IMR-90 (cell line): ENCODE measurements at regions of chr3 and their contacts with region 1.

Region 1: DNA sequence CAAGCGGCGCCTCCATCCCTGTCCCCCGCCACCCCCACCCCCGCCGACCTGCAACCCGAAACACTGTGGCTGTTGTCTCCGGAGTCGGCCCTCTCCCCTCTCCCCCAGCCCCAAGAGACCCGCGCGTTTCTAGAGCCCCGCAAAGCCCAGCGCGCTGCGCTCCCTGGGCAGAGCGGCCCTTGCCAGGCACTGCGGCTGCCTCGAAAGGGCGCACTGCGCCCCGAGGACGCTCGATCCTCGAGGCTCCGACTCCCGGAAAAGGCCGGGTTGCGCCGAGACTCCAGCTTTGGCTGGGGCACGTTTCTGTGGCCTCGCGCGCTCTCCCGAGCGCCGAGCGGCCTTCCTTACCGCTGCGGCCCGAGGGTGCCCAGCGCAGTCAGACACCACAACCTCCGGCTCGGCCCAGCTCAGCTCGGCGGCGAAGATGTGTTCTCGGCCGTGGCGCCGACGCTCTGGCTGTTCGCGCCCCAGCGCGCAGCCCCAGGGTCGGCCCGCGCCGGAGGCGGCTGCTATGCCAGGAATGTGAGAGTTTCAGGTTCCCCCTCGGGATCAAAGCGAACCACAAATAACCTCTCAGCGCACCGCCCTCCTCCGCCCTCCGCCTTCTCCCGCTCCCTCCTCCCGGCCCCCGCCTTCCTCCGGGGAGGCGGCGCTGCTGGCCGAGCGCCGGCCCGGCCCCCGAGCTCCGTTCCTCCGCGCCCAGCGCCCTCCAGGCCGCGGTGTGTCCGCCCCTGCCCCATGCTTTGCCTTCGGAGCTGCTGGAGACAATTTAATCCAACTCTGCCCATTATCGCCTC is at the start of gene AMOTL2:
- DNase-seq: peak; percentile 97
- ATAC-seq: peak; percentile 76
- H3K4me3 ChIP-seq: peak within 1 kb of the TSS; percentile 76
- H3K27ac ChIP-seq: peak within 1 kb of the TSS; percentile 99
- H3K4me1 ChIP-seq: peaks cover 29% of the 10 kb centered on the region
- H3K27me3 ChIP-seq: no peaks in the 10 kb centered on the region
- CTCF ChIP-seq: no peak
- POLR2A ChIP-seq: peak; percentile 99
- RAD21 ChIP-seq: peak; percentile 17; the same call in 1 of the 2 replicates
- total RNA-seq, gene AMOTL2: 162 and 172 TPM in 2 replicates

Region 2: GRCh38 chr3:134161898-134162615 is 212.1 kb before region 1 on chr3:
- CTCF ChIA-PET with region 1: no interaction called
- POLR2A ChIA-PET with region 1: no interaction called
- dilution Hi-C with region 1: no loop called
- in situ Hi-C with region 1: no loop called
- intact Hi-C with region 1: no loop called
- DNase-seq: no peak
- ATAC-seq: no peak
- H3K4me3 ChIP-seq: no peak overlapping the region
- H3K27ac ChIP-seq: no peak overlapping the region
- H3K4me1 ChIP-seq: peaks cover 2% of the 10 kb centered on the region; the same call in 1 of the 2 replicates
- H3K27me3 ChIP-seq: no peaks in the 10 kb centered on the region
- CTCF ChIP-seq: no peak
- POLR2A ChIP-seq: no peak
- RAD21 ChIP-seq: no peak

Region 3: DNA sequence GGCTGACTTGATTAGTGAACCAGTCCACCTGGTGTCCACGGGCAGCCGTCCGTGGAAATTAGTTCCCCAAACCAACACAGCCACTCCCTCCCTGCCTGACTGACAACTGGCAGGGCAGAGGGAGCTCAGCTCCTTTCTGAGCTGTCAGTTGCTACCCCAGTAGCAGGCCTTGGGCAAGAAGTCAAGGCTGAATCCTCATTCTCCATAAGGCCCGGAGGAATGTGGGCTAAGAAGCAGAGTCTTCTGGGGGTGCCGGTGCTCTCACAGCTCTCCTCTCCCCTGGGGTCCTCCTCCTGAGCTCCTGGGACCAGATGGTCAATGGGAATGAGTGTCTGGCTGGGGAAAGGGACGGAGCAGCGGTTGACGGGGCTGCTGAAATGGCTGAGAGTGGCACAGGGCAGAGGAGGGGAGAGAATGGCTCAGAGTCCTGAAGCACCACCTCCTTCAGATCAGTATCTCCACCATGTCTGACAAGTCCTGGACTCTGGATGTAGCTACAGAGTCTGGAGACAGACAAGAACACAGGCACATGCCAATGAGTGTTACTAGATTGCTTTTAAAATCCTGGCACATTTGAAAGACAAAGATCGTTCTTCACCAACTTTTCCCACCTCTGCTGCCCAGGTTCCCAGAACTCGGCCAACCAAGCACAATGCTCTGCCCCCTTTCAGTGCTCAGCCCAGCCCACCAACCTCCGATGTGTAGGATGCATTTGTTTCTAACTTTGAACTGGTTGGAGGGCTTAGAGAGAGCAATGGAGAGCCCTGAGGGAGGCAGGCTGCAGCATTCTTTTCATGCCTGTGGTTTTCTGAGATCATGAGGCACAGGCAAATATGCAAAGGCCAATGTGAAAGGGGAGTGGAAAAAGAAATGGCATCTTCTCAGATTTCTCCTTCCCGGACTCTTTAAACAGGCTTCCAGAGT is 16.7 kb before region 1 on chr3:
- CTCF ChIA-PET with region 1: interaction called, 3 read pairs
- POLR2A ChIA-PET with region 1: interaction called, 11 read pairs
- dilution Hi-C with region 1: no loop called
- in situ Hi-C with region 1: no loop called
- intact Hi-C with region 1: no loop called
- DNase-seq: peak; percentile 96
- ATAC-seq: peak; percentile 73
- H3K4me3 ChIP-seq: no peak overlapping the region
- H3K27ac ChIP-seq: peak overlapping the region; percentile 95
- H3K4me1 ChIP-seq: peaks cover 60% of the 10 kb centered on the region
- H3K27me3 ChIP-seq: no peaks in the 10 kb centered on the region
- CTCF ChIP-seq: no peak
- POLR2A ChIP-seq: peak; percentile 56
- RAD21 ChIP-seq: peak; percentile 36

Region 4: DNA sequence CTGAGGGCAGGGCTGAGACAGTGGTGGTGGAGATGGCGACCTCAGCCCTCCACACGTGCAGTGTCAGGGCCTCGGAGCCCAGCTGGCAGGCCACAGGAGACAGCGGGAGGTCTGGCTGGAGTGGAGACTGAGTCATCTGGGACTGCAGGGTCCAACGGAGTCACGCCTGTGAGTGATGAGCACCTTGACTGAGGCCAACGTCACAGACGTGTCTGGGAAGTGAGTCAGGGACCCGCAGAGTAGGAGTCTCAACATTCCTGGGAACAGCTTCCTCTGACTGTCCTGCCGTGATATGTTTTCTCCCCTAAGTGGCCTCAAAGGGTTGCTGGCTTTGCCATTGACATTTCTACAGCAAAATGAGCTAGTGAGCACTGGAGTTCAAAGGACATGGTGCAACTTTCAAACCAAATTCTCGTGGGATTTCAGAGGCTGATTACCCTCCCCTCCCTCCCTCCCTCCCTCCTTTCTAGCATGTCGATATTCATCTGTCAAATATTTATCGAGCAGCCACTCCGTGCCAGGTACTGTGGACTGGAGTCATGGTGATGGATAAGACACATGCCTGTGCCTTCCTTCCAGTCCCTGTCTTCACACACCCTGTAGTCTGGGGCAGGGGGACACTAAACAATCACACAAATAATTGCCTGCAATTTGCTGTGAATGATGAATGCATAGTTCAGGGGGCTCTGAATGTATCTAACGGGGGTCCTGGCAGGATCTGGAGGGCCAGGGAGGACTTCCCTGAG is 53.4 kb after region 1 on chr3:
- CTCF ChIA-PET with region 1: no interaction called
- POLR2A ChIA-PET with region 1: interaction called, 4 read pairs
- dilution Hi-C with region 1: no loop called
- in situ Hi-C with region 1: no loop called
- intact Hi-C with region 1: loop called (anchors 1 kb)
- DNase-seq: peak; percentile 100
- ATAC-seq: peak; percentile 88
- H3K4me3 ChIP-seq: no peak overlapping the region
- H3K27ac ChIP-seq: peak overlapping the region; percentile 90
- H3K4me1 ChIP-seq: peaks cover 32% of the 10 kb centered on the region
- H3K27me3 ChIP-seq: no peaks in the 10 kb centered on the region
- CTCF ChIP-seq: peak; percentile 36
- POLR2A ChIP-seq: peak; percentile 86
- RAD21 ChIP-seq: peak; percentile 63

Region 5: DNA sequence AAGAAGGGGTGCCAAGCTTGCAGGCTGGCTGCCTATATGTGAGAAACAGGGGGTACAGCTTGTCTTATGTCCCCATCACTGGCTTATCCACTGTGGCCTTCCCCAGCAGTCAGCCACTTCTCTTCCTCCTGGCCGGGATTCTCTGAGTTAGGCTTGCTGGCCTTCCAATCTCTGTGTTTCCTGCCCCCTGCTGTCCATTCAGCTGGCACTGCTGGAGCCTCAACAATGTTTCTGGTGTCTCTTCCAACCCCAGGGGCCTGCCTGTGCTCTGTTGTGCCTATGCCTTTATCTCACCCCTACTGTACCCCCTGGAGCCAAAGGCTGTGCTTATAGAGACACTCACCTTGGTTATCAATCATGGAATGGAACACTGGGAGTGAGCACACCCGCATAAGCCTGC is 75.1 kb after region 1 on chr3:
- CTCF ChIA-PET with region 1: no interaction called
- POLR2A ChIA-PET with region 1: interaction called, 4 read pairs
- dilution Hi-C with region 1: no loop called
- in situ Hi-C with region 1: no loop called
- intact Hi-C with region 1: loop called (anchors 5 kb)
- DNase-seq: peak; percentile 45
- ATAC-seq: peak; percentile 57
- H3K4me3 ChIP-seq: no peak overlapping the region
- H3K27ac ChIP-seq: no peak overlapping the region
- H3K4me1 ChIP-seq: peaks cover 18% of the 10 kb centered on the region
- H3K27me3 ChIP-seq: no peaks in the 10 kb centered on the region
- CTCF ChIP-seq: peak; percentile 53
- POLR2A ChIP-seq: no peak
- RAD21 ChIP-seq: peak; percentile 56

Region 6: GRCh38 chr3:134464064-134464697 is 90.0 kb after region 1 on chr3:
- CTCF ChIA-PET with region 1: no interaction called
- POLR2A ChIA-PET with region 1: interaction called, 3 read pairs
- dilution Hi-C with region 1: no loop called
- in situ Hi-C with region 1: no loop called
- intact Hi-C with region 1: loop called (anchors 1 kb)
- DNase-seq: peak; percentile 99
- ATAC-seq: peak; percentile 70
- H3K4me3 ChIP-seq: no peak overlapping the region
- H3K27ac ChIP-seq: peak overlapping the region; percentile 92
- H3K4me1 ChIP-seq: peaks cover 38% of the 10 kb centered on the region
- H3K27me3 ChIP-seq: no peaks in the 10 kb centered on the region
- CTCF ChIP-seq: no peak
- POLR2A ChIP-seq: no peak
- RAD21 ChIP-seq: peak; percentile 34

Region 7: DNA sequence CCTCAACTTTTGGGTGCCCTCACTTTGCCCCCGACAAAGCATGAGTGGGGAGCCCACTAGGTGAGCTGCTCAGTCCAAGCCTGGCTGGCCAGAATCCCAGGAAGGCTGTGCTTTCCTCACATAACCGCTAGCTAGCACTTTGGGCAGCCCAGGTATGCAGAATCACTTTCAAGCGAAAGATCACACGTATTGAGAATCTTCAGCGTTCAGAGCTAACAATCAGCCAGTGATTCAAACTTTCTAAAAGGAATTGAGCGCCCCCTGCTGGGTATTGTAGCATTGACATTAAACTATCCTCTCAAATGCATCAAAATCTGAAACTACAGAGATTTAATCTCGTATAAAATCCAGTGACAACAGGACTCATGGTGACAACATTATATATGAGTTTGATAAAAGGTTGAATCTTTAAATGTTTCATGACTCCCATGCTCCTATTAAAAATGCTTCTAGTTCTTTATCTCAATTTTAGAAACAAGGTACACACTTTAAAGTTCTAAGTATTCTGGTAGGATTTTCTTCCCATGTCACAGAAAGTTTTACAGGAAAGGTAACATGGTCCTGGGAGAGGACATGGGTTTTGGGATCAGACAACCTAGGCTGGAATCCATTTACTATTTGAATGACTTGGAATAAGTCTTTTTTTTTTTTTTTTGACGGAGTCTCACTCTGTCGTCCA is 99.8 kb after region 1 on chr3:
- CTCF ChIA-PET with region 1: interaction called, 4 read pairs
- POLR2A ChIA-PET with region 1: interaction called, 8 read pairs
- dilution Hi-C with region 1: no loop called
- in situ Hi-C with region 1: no loop called
- intact Hi-C with region 1: loop called (anchors 1 kb)
- DNase-seq: peak; percentile 87
- ATAC-seq: peak; percentile 64
- H3K4me3 ChIP-seq: no peak overlapping the region
- H3K27ac ChIP-seq: peak overlapping the region; percentile 79
- H3K4me1 ChIP-seq: peaks cover 24% of the 10 kb centered on the region
- H3K27me3 ChIP-seq: no peaks in the 10 kb centered on the region
- CTCF ChIP-seq: peak; percentile 87
- POLR2A ChIP-seq: peak; percentile 52
- RAD21 ChIP-seq: peak; percentile 91